ENCODE measurements at regions of chr13 and their contacts with region 1.

Region 1: GRCh38 chr13:32894589-32895001 is 121.6 kb upstream of the KL start:
- DNase-seq: no peak
- H3K4me3 ChIP-seq: no peak overlapping the region
- H3K27ac ChIP-seq: no peak overlapping the region
- H3K4me1 ChIP-seq: no peaks in the 10 kb centered on the region
- H3K27me3 ChIP-seq: no peaks in the 10 kb centered on the region
- CTCF ChIP-seq: no peak
- EP300 ChIP-seq: no peak
- POLR2A ChIP-seq: no peak
- RAD21 ChIP-seq: no peak

Region 2: GRCh38 chr13:32911506-32911905 is 16.9 kb after region 1 on chr13:
- CTCF ChIA-PET with region 1: interaction called, 24 read pairs
- POLR2A ChIA-PET with region 1: no interaction called
- DNase-seq: peak in 1 of 2 experiments; percentile 15
- H3K4me3 ChIP-seq: no peak overlapping the region
- H3K27ac ChIP-seq: no peak overlapping the region
- H3K4me1 ChIP-seq: no peaks in the 10 kb centered on the region
- H3K27me3 ChIP-seq: no peaks in the 10 kb centered on the region
- CTCF ChIP-seq: peak; percentile 47 to 80 (median 66)
- EP300 ChIP-seq: no peak
- POLR2A ChIP-seq: no peak
- RAD21 ChIP-seq: peak; percentile 88 to 91

Region 3: DNA sequence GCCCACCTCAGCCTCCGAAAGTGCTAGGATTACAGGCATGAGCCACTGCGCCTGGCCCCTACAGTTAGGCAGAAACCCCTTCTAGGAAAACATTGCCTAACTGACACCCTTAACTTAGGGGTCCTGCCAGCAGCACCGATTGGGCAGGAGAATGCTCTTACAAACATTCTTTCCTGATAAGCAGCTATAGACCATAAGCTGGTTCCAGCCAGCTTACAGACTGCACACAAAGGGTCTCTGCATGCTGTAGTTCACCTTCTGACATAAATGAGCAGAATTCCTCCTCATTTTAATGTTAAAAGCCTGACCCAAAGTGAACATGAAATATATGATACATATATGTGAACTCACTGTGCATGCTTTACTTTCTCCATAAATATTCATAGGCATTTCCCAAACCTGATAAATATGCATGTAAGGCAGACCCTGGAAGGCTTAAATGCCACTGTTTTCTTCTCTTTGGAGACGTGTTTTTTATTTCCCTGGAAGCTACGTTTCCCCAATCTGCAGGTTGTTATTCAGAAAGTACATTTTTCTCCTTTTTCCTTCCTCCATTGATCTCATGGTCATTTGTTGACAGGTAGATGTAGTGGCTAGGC is 73.1 kb after region 1 on chr13:
- CTCF ChIA-PET with region 1: no interaction called
- POLR2A ChIA-PET with region 1: no interaction called
- DNase-seq: no peak
- H3K4me3 ChIP-seq: no peak overlapping the region
- H3K27ac ChIP-seq: no peak overlapping the region
- H3K4me1 ChIP-seq: no peaks in the 10 kb centered on the region
- H3K27me3 ChIP-seq: no peaks in the 10 kb centered on the region
- CTCF ChIP-seq: no peak
- EP300 ChIP-seq: no peak
- POLR2A ChIP-seq: no peak
- RAD21 ChIP-seq: no peak